Right ventricle myocardium inferior (tissue), 1 donor: ENCODE measurements at regions of chr17 and their contacts with region 1.

Region 1: DNA sequence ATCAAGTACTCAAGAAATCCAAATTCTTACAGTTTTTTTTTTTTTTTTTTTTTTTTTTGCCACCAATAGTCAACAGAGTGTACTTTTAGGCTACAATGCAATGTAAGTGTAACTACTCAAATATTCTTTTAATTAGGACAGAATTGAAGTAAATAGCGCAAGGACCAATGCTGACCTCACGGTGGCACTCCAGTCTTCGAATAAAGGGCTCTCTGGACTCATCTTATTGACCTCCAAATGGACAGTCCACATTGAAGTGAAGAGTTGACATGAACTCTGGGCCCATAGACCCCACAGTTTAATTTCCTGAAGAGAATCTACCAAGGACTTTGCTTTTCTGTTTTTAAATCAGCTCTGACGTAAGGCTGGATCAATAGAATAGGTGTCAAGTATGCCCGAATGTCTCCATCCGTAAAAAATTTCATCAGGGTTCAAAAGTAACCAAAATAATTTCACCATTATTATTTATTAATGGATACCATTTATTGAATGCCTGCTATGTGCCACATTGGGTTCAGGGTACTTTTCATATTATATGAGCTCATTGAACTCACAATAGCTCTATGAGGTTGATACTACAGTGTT is 7.3 kb upstream of the DDX52 start:
- DNase-seq: no peak
- ATAC-seq: no peak

Region 2: GRCh38 chr17:37605813-37606505 is 44.6 kb before region 1 on chr17:
- intact Hi-C with region 1: no loop called
- DNase-seq: no peak
- ATAC-seq: no peak

Region 3: DNA sequence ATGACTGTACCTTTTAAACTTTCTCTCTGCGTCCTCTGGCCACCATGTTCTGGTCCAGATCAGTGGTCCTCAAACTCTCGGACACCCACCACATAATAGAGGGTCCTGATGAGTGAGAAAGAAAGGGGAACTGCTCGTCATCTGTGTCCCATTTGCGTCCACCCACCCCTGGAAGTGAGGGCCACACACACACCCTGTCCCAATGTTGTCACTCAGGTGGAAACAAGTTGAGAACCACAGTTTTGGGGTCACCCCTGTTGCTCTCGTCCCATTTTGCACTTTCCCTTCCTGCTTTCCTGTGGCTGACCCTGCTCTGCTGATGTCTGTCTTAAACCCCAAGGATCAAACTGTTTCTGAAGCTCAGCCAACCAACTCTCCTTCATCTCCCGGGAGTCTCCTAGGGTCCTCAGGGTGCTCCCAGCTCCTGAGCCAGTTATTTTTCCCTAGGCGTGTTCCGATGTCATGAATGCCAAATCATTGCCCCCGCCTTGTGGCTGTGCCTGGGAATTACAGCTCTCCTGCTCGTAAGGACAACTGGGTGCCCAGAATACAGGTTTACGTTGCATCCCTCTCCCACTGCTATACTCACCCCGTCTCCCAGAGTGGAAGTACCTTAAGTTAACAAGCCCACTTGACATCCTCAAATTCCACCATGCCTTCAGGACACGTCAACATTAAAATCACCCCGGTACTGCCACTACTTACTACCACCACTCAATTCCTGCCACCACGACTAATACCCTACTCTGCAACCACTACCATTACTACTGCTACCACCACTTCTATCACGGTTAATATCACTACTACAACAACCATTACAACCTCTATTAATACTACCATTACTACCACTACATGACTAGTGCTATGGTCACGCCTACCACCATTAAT is 120.4 kb after region 1 on chr17:
- intact Hi-C with region 1: loop called (anchors 1 kb)
- DNase-seq: no peak
- ATAC-seq: no peak

Region 4: GRCh38 chr17:37818689-37819088 is 168.2 kb after region 1 on chr17:
- intact Hi-C with region 1: loop called (anchors 5 kb)
- DNase-seq: no peak
- ATAC-seq: no peak